B cell (primary cell): ENCODE measurements at regions of chr1 and their contacts with region 1.

Region 1: DNA sequence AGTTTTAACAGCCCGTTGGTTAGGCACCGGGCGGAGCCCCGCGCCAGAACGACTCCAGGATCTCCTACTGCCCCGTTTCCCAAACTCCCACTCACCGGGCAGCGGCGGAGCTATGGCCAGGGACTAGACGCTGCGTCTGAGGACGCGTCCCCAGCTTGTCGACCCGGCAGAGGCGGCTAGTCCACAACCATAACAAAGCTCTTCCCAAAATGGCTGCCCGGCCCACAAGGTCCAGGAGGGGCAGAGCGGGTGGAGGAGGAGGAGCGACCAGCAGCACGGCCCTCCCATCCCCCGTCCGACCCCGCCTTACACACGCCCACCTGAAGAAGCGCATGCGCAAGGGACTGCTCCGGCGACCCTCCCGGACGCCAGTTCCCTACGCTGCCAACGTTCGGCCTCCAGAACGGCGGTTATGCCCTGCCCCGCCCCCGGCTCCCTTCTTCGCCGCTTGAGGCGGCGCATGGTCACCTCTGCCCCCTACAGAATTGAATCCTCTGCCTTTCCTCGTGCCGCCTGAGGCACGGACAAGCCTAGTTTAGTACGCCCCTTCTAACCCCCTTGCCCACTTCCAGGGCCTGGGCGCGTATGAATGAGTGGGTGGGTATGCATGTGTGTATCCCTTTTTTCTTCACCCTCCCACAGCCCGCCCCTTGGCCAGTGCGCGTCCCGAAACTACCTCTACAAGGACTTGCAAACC is at the start of gene GPBP1L1:
- DNase-seq: peak; percentile 99
- ATAC-seq: peak; percentile 72
- H3K4me3 ChIP-seq: peak within 1 kb of the TSS; percentile 65 to 99 (median 96)
- H3K4me3 Mint-ChIP-seq: peak within 1 kb of the TSS; percentile 100
- H3K27ac ChIP-seq: peak within 1 kb of the TSS; percentile 98
- H3K27ac Mint-ChIP-seq: peak within 1 kb of the TSS; percentile 100
- H3K4me1 ChIP-seq: peaks cover 23 to 30% of the 10 kb centered on the region in 2 donors
- H3K4me1 Mint-ChIP-seq: peaks cover 54% of the 10 kb centered on the region
- H3K27me3 ChIP-seq: no peaks in the 10 kb centered on the region
- H3K27me3 Mint-ChIP-seq: no peaks in the 10 kb centered on the region
- CTCF ChIP-seq: no peak
- total RNA-seq, gene GPBP1L1: 137 and 167 TPM in 2 replicates

Region 2: GRCh38 chr1:44786138-44786840 is 900.2 kb before region 1 on chr1:
- CTCF ChIA-PET with region 1: no interaction called
- POLR2A ChIA-PET with region 1: no interaction called
- intact Hi-C with region 1: loop called (anchors 5 kb)
- DNase-seq: peak; percentile 88
- ATAC-seq: peak; percentile 72
- H3K4me3 ChIP-seq: peak overlapping the region in 4 of 5 experiments; percentile 53 to 68 (median 60)
- H3K4me3 Mint-ChIP-seq: peak overlapping the region; percentile 82
- H3K27ac ChIP-seq: peak overlapping the region; percentile 47 to 50
- H3K27ac Mint-ChIP-seq: peak overlapping the region; percentile 92
- H3K4me1 ChIP-seq: peaks cover 25 to 34% of the 10 kb centered on the region in 2 donors
- H3K4me1 Mint-ChIP-seq: peaks cover 31% of the 10 kb centered on the region
- H3K27me3 ChIP-seq: no peaks in the 10 kb centered on the region
- H3K27me3 Mint-ChIP-seq: no peaks in the 10 kb centered on the region
- CTCF ChIP-seq: peak; percentile 100

Region 3: GRCh38 chr1:45499415-45499769 is 187.1 kb before region 1 on chr1:
- CTCF ChIA-PET with region 1: no interaction called
- POLR2A ChIA-PET with region 1: interaction called, 7 read pairs
- intact Hi-C with region 1: loop called (anchors 1 kb)
- DNase-seq: no peak
- ATAC-seq: no peak
- H3K4me3 ChIP-seq: peak overlapping the region; percentile 68 to 89 (median 74)
- H3K4me3 Mint-ChIP-seq: peak overlapping the region; percentile 96
- H3K27ac ChIP-seq: peak overlapping the region; percentile 52 to 67
- H3K27ac Mint-ChIP-seq: peak overlapping the region; percentile 80
- H3K4me1 ChIP-seq: peaks cover 12 to 22% of the 10 kb centered on the region in 2 donors
- H3K4me1 Mint-ChIP-seq: peaks cover 28% of the 10 kb centered on the region
- H3K27me3 ChIP-seq: no peaks in the 10 kb centered on the region
- H3K27me3 Mint-ChIP-seq: no peaks in the 10 kb centered on the region
- CTCF ChIP-seq: no peak

Region 4: GRCh38 chr1:45803301-45803780 is 116.9 kb after region 1 on chr1 and contains the start of gene MAST2:
- CTCF ChIA-PET with region 1: no interaction called
- POLR2A ChIA-PET with region 1: no interaction called
- intact Hi-C with region 1: loop called (anchors 1 kb)
- DNase-seq: peak; percentile 92
- ATAC-seq: peak; percentile 97
- H3K4me3 ChIP-seq: peak within 1 kb of the TSS; percentile 31 to 64 (median 52)
- H3K4me3 Mint-ChIP-seq: peak within 1 kb of the TSS; percentile 98
- H3K27ac ChIP-seq: no peak within 1 kb of the TSS
- H3K27ac Mint-ChIP-seq: peak within 1 kb of the TSS; percentile 71
- H3K4me1 ChIP-seq: peaks cover 11 to 15% of the 10 kb centered on the region in 2 donors
- H3K4me1 Mint-ChIP-seq: peaks cover 27% of the 10 kb centered on the region
- H3K27me3 ChIP-seq: no peaks in the 10 kb centered on the region
- H3K27me3 Mint-ChIP-seq: no peaks in the 10 kb centered on the region
- CTCF ChIP-seq: no peak
- total RNA-seq, gene MAST2: 23.3 and 26.4 TPM in 2 replicates

Region 5: GRCh38 chr1:46340404-46341221 is 654.1 kb after region 1 on chr1 and contains the start of gene NSUN4:
- CTCF ChIA-PET with region 1: no interaction called
- POLR2A ChIA-PET with region 1: no interaction called
- intact Hi-C with region 1: loop called (anchors 2 kb)
- DNase-seq: peak; percentile 94
- ATAC-seq: peak; percentile 79
- H3K4me3 ChIP-seq: peak within 1 kb of the TSS; percentile 69 to 99 (median 97)
- H3K4me3 Mint-ChIP-seq: peak within 1 kb of the TSS; percentile 100
- H3K27ac ChIP-seq: peak within 1 kb of the TSS; percentile 99 to 100
- H3K27ac Mint-ChIP-seq: peak within 1 kb of the TSS; percentile 99
- H3K4me1 ChIP-seq: peaks cover 10 to 21% of the 10 kb centered on the region in 2 donors
- H3K4me1 Mint-ChIP-seq: peaks cover 30% of the 10 kb centered on the region
- H3K27me3 ChIP-seq: no peaks in the 10 kb centered on the region
- H3K27me3 Mint-ChIP-seq: no peaks in the 10 kb centered on the region
- CTCF ChIP-seq: peak; percentile 64
- total RNA-seq, gene NSUN4: 30.1 and 33.7 TPM in 2 replicates